PC-9 (cell line): ENCODE measurements at regions of chr9 and their contacts with region 1.

Region 1: GRCh38 chr9:111798786-111799185 is 4.0 kb upstream of the SHOC1 start:
- DNase-seq: no peak
- H3K4me3 ChIP-seq: no peak overlapping the region
- H3K27ac ChIP-seq: no peak overlapping the region
- H3K4me1 ChIP-seq: peaks cover 6% of the 10 kb centered on the region; the same call in 1 of the 2 replicates
- H3K27me3 ChIP-seq: no peaks in the 10 kb centered on the region
- CTCF ChIP-seq: no peak

Region 2: DNA sequence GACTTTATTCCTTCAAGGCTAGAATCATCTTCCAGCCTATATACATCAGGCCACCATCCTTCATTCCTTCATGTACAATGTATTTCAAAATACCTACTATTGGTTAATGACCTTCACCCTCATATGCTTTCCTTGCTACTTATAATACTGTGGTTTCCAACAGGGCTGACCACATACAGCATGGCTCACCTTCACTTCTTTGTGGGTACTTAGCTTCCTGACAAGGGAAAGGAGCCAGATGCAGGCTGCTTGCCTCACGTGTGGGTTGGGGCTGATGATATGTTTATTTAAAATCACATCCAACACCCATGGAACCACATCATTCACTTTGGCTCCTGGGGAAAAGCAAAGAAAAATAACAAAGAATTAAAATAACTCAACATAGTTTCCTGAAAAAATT is 404.8 kb before region 1 on chr9:
- CTCF ChIA-PET with region 1: no interaction called
- POLR2A ChIA-PET with region 1: no interaction called
- intact Hi-C with region 1: no loop called
- DNase-seq: no peak
- H3K4me3 ChIP-seq: no peak overlapping the region
- H3K27ac ChIP-seq: no peak overlapping the region
- H3K4me1 ChIP-seq: no peaks in the 10 kb centered on the region
- H3K27me3 ChIP-seq: no peaks in the 10 kb centered on the region
- CTCF ChIP-seq: no peak

Region 3: DNA sequence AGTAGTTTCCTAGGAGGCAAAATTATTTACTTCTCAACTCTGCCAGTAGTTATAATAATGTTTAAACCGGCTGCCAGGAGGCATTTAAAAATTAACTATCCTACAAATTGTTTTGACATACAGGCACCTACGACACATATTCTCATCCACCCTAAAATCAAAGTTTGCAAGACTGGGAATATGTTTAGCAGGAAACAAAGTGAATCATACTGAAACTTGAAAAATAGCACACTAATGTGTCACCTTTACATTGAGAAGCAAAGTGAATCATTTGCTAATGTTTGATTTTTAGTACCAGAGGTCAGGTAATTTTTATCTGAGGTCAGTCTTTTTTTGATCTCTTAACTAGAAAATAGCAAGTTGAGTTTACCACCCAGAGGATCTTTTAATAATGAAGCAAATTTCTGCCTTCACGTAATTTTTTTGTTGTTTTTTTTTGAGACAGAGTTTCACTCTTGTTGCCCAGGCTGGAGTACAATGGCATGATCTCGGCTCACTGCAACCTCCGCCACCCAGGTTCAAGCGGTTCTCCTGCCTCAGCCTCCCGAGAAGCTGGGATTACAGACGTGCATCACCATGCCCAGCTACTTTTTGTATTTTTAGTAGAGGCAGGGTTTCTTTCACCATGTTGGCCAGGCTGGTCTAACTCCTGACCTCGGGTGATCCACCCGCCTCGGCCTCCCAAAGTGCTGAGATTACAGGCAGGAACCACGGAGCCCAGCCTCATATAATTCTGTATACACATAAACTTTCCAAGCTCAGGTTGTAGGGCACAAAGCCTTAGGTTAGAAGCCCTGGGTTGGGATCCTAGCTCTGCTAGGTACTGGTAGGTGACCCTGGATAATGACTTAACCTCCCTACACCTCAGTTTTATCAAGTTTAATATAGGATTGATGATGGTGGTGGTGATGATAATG is 222.2 kb after region 1 on chr9:
- CTCF ChIA-PET with region 1: no interaction called
- POLR2A ChIA-PET with region 1: interaction called, 11 read pairs
- intact Hi-C with region 1: no loop called
- DNase-seq: peak in 1 of 2 experiments; percentile 96
- H3K4me3 ChIP-seq: no peak overlapping the region
- H3K27ac ChIP-seq: peak overlapping the region; percentile 93
- H3K4me1 ChIP-seq: peaks cover 19% of the 10 kb centered on the region
- H3K27me3 ChIP-seq: no peaks in the 10 kb centered on the region
- CTCF ChIP-seq: no peak